MCF 10A (cell line): ENCODE measurements at regions of chr11 and their contacts with region 1.

Region 1: GRCh38 chr11:107549253-107549953 is 16.1 kb downstream of the ALKBH8 start:
- DNase-seq: peak; percentile 63
- H3K4me3 Mint-ChIP-seq: no peak overlapping the region
- H3K27ac Mint-ChIP-seq: no peak overlapping the region
- H3K4me1 Mint-ChIP-seq: peaks cover 13% of the 10 kb centered on the region
- H3K27me3 Mint-ChIP-seq: no peaks in the 10 kb centered on the region
- CTCF ChIP-seq: peak; percentile 67

Region 2: DNA sequence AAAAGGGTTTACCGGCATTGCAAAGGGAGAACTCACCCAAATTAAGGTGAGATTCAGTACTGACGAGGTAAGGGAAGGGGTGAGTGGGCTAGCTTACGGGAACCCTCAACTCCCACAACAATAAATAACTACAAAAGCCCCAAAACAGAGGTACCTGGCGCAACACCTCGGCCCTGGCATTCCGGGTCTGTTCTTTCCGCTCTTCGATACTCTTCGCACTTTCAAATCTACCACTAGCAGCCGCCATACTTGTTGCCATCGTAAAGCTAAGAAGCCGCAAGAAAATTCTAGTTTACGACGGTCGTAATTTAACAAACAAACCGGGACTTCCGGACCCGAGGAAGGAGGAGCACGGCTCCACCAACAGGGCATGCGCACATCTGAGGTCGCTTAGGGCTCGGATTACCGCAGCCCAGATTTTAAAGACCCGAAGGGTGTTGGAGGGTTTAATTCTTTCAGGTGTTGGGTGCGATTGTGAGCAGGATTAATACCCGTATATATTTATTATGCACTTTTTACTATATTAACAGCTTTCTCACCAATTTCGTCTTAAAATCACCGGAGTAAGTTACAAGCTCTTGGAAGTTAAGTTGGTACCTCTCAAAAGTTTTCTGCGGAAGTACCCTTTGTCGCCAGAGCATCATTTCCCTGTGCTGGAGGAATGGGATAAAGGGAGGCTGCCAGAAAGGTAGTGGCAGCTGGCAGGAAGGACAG is 91.7 kb before region 1 on chr11 and contains the start of gene CWF19L2:
- CTCF ChIA-PET with region 1: no interaction called
- POLR2A ChIA-PET with region 1: interaction called, 15 read pairs
- intact Hi-C with region 1: no loop called
- DNase-seq: peak; percentile 95
- H3K4me3 Mint-ChIP-seq: peak within 1 kb of the TSS; percentile 91
- H3K27ac Mint-ChIP-seq: peak within 1 kb of the TSS; percentile 87
- H3K4me1 Mint-ChIP-seq: peaks cover 16% of the 10 kb centered on the region
- H3K27me3 Mint-ChIP-seq: peaks cover 10% of the 10 kb centered on the region
- CTCF ChIP-seq: no peak
- total RNA-seq, gene CWF19L2: 8.5 and 10.7 TPM in 2 replicates

Region 3: DNA sequence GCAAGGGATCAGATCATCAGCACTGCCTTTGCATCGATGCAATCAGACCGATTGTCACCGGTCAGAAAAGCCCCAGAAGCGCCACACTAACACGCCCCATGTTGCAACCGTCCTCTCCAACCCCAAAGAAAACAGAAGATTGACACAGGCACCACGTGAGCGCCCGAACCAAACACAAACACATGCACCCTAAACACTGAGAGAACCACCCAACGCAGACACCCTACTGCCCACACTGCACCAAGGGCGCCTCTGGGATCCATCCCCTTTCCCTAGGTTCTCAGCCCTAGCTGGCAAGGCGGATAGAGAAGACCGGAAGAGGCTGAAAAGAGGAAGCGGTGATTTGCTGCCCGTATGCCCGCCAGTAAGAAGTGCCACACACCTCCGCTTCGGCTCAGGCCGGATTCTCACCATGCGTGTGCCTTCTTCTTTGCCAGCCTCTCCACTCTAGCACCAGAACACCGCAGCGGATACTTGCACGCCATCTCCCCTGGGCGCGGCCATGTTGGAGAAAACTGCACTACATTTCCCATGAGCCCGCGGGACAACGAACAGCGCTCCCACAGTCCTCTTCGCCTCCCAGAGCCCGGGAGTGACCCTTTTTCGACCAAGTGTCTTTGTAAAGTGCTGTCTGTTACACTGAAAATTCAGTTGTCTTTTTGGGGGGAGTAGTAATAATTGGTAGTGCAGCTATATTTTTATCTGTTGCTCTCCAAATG is 16.0 kb after region 1 on chr11 and contains the start of gene ALKBH8:
- CTCF ChIA-PET with region 1: interaction called, 63 read pairs
- POLR2A ChIA-PET with region 1: interaction called, 7 read pairs
- intact Hi-C with region 1: no loop called
- DNase-seq: peak; percentile 72
- H3K4me3 Mint-ChIP-seq: peak within 1 kb of the TSS; percentile 83
- H3K27ac Mint-ChIP-seq: peak within 1 kb of the TSS; percentile 82
- H3K4me1 Mint-ChIP-seq: peaks cover 23% of the 10 kb centered on the region
- H3K27me3 Mint-ChIP-seq: no peaks in the 10 kb centered on the region
- CTCF ChIP-seq: no peak
- total RNA-seq, gene ALKBH8: 5.1 and 7.3 TPM in 2 replicates

Region 4: GRCh38 chr11:107573438-107573837 is 24.0 kb after region 1 on chr11:
- CTCF ChIA-PET with region 1: interaction called, 15 read pairs
- POLR2A ChIA-PET with region 1: no interaction called
- intact Hi-C with region 1: loop called (anchors 1 kb)
- DNase-seq: no peak
- H3K4me3 Mint-ChIP-seq: no peak overlapping the region
- H3K27ac Mint-ChIP-seq: no peak overlapping the region
- H3K4me1 Mint-ChIP-seq: no peaks in the 10 kb centered on the region
- H3K27me3 Mint-ChIP-seq: peaks cover 15% of the 10 kb centered on the region
- CTCF ChIP-seq: no peak

Region 5: GRCh38 chr11:108069947-108070346 is 520.5 kb after region 1 on chr11:
- CTCF ChIA-PET with region 1: no interaction called
- POLR2A ChIA-PET with region 1: no interaction called
- intact Hi-C with region 1: no loop called
- DNase-seq: peak; percentile 6
- H3K4me3 Mint-ChIP-seq: no peak overlapping the region
- H3K27ac Mint-ChIP-seq: no peak overlapping the region
- H3K4me1 Mint-ChIP-seq: no peaks in the 10 kb centered on the region
- H3K27me3 Mint-ChIP-seq: no peaks in the 10 kb centered on the region
- CTCF ChIP-seq: no peak